Colonic mucosa (tissue), 4 donors: ENCODE measurements at regions of chr13 and their contacts with region 1.

Region 1: DNA sequence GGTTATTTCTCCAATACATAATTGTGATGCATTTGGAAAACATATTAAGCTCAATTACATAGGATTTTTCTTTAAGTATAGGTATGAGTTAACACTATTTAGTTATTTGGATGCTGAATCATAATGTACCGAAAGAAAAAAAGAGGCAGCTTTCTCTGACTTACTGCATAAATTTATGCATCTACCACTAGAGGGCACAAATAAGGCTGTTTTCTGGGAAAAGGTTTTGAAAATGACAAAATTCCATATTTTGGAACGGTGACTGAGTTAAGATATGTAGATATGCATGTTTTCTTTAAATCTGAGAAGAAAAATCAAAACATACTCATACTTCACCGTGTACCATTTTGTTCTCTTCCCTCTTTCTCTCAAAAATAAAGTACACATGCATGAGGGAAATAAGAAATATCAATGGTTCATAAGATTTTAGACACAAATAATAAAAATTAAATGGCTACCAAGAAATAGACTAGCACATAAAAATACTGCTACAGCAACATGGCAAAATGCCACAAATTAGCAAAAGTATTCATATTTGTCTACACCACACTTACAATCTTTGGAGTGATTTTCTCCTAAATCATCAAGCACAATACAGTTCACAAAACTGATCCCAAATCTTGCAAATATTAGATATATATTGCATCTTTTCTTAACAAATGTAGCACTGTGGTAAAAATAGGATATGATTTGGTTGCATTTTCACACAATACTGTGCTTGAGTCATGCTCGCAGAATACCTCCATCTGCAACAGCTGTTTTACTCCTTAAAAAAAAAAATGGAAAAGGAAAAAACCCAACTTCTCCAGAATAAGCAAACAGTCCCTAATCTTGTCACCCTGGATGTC is 260.0 kb downstream of the FGF14 start:
- DNase-seq: no peak
- H3K4me3 ChIP-seq: no peak overlapping the region
- H3K27ac ChIP-seq: no peak overlapping the region
- H3K4me1 ChIP-seq: no peaks in the 10 kb centered on the region
- H3K27me3 ChIP-seq: no peaks in the 10 kb centered on the region
- CTCF ChIP-seq: peak; percentile 51

Region 2: DNA sequence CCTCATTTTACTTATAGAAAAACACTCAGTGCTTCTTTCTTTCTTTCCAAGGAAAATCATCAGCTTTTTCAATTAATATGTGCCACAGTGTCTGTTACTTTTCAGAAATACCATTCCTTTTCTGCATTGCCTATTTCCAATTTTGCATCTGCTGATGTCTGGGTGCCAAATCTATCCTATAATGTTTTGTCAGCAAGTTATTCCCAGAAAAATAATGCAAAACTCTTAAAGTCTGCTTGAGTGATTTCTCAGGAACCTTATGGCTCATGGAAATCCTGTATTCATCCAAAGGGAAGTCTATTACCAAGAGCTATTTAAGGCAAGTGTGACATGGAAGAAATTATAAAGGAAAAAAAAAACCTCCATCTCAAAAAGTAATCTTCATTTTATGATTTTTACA is 35.6 kb after region 1 on chr13:
- intact Hi-C with region 1: no loop called
- DNase-seq: no peak
- H3K4me3 ChIP-seq: no peak overlapping the region
- H3K27ac ChIP-seq: no peak overlapping the region
- H3K4me1 ChIP-seq: no peaks in the 10 kb centered on the region
- H3K27me3 ChIP-seq: no peaks in the 10 kb centered on the region
- CTCF ChIP-seq: no peak

Region 3: DNA sequence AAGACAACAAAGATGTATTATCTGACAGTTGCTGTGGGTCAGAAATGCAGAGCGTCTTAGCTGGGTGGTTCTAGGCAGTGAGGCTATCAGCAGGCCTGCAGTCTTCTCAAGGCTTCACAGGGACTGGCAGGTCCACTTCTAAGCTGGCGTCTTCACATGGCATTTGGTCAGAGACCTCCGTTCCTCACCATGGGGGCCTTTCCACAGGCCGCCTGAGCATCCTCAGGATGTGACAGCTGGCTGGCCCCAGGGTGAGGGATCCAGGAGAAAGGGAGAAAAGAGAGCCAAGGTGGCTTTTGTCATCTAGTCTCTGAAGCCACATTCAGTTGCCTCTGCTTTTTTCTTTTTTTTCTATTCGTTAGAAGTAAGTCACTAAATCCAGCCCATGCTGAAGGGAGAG is 209.7 kb after region 1 on chr13:
- intact Hi-C with region 1: no loop called
- DNase-seq: no peak
- H3K4me3 ChIP-seq: no peak overlapping the region
- H3K27ac ChIP-seq: no peak overlapping the region
- H3K4me1 ChIP-seq: no peaks in the 10 kb centered on the region
- H3K27me3 ChIP-seq: no peaks in the 10 kb centered on the region
- CTCF ChIP-seq: no peak

Region 4: GRCh38 chr13:102422690-102423089 is 280.8 kb after region 1 on chr13:
- intact Hi-C with region 1: no loop called
- DNase-seq: no peak
- H3K4me3 ChIP-seq: no peak overlapping the region
- H3K27ac ChIP-seq: no peak overlapping the region
- H3K4me1 ChIP-seq: no peaks in the 10 kb centered on the region
- H3K27me3 ChIP-seq: no peaks in the 10 kb centered on the region
- CTCF ChIP-seq: no peak

Region 5: GRCh38 chr13:102460801-102461200 is 319.0 kb after region 1 on chr13:
- intact Hi-C with region 1: loop called (anchors 5 kb)
- DNase-seq: no peak
- H3K4me3 ChIP-seq: no peak overlapping the region
- H3K27ac ChIP-seq: no peak overlapping the region
- H3K4me1 ChIP-seq: no peaks in the 10 kb centered on the region
- H3K27me3 ChIP-seq: no peaks in the 10 kb centered on the region
- CTCF ChIP-seq: no peak

Region 6: DNA sequence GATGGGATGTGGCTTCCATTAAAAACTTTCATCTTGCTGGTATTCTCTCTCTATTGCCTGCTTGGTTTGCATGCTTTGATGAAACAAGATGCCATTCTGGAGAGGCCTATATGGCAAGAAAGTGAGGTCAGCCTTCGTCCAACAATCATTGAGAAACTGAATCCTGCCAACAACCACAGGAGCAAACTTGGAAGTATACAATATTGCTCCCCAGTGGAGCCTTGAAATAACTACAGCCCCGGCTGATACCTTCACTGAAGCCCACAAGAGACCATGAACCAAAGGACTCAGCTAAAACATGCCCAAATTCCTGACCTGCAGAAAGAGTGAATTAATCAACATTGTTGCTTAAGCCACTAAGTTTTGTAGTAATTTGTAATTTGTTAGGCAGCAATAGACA is 342.5 kb after region 1 on chr13:
- intact Hi-C with region 1: no loop called
- DNase-seq: no peak
- H3K4me3 ChIP-seq: no peak overlapping the region
- H3K27ac ChIP-seq: no peak overlapping the region
- H3K4me1 ChIP-seq: no peaks in the 10 kb centered on the region
- H3K27me3 ChIP-seq: no peaks in the 10 kb centered on the region
- CTCF ChIP-seq: no peak